ENCODE measurements at regions of chr6 and their contacts with region 1.

Region 1: GRCh38 chr6:25601800-25602673 is 50.0 kb upstream of the SCGN start:
- DNase-seq: peak in 1 of 2 experiments; percentile 43
- H3K4me3 ChIP-seq: no peak overlapping the region
- H3K27ac ChIP-seq: no peak overlapping the region
- H3K4me1 ChIP-seq: no peaks in the 10 kb centered on the region
- H3K27me3 ChIP-seq: no peaks in the 10 kb centered on the region
- CTCF ChIP-seq: peak; percentile 85

Region 2: DNA sequence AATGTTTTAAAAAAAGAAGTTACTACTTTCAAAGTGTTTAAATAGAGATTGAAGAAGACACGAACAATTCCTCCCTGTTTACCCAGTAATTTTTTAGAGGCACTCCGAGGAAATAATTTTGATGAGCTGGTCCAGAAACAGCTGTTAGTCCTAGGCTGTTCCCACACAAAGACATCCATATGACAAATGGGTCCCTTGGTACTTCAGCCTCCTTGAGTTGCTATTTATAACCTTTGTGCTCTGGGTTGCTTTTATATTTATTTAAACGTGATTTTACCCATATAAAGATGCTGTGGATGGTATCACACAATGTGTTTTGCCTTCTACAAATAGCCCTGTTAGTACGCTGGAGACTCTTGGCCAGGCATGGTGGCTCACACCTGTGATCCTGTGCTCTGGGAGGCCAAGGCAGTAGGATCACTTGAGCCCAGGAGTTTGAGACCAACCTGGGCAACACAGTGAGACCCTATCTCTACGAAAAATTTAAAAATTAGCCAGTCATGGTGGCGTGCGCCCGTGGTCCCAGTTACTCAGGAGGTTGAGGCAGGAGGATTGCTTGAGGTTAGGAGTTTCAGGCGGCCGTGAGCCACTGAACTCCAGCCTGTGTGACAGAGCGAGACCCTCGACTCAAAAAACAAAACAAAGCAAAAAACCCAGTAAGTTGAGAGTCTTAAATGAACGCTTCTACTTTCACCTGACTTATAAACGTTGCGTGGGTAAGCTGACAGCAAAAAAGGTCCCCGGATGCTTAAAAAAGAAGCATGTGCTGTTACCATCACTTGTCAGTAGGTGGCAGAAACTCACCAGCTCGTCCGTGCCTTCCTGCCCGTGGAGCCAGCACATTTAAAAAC is 746.4 kb before region 1 on chr6:
- CTCF ChIA-PET with region 1: no interaction called
- POLR2A ChIA-PET with region 1: no interaction called
- intact Hi-C with region 1: loop called (anchors 10 kb)
- DNase-seq: peak; percentile 44 to 58
- H3K4me3 ChIP-seq: no peak overlapping the region
- H3K27ac ChIP-seq: no peak overlapping the region
- H3K4me1 ChIP-seq: peaks cover 26% of the 10 kb centered on the region
- H3K27me3 ChIP-seq: no peaks in the 10 kb centered on the region
- CTCF ChIP-seq: peak; percentile 89

Region 3: DNA sequence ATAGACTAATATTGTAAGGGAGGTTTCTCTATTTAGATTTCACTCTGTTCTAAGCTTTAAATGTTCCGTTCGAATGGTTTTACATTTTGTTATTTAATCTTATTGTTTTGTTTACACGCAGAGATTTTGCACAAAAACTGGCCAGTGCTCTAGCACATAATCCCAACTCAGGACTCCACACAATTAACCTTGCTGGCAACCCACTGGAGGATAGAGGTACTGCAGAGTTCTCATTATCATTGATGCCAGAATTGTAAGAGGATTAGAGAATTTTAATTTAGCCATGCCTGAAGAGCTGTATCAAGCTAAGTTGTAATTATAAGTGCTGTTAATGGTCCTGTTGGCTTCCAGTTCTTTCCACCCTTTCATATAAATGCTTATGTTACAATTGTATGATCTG is 129.7 kb before region 1 on chr6:
- CTCF ChIA-PET with region 1: no interaction called
- POLR2A ChIA-PET with region 1: no interaction called
- intact Hi-C with region 1: no loop called
- DNase-seq: no peak
- H3K4me3 ChIP-seq: no peak overlapping the region
- H3K27ac ChIP-seq: no peak overlapping the region
- H3K4me1 ChIP-seq: no peaks in the 10 kb centered on the region
- H3K27me3 ChIP-seq: no peaks in the 10 kb centered on the region
- CTCF ChIP-seq: peak; percentile 49; the same call in 1 of the 2 replicates

Region 4: DNA sequence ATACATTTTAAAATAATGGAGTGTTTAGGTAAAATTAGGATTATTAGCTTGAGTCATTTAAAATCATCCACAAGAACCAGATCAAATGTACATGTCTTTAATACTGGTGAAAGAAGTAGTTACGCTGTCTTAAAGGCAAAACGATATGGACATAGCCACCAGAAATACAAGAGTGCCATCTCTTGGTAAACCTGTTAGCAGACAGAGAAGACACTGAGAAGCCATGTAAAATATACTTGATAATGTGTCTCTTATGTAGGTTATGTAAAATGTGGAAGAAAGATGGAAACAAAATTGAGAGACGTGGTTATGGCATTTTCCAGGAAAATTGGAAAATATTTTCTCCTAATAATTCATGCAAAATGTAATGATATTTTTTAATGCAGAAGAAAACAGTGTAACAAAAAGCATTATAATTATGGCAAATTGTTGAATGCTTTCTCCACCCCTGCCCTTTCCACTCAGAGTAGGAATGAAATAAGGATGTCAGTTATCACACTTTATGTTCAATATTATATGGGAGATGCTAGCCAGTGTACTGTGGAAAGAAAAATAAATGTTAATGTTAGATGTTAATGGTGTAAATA is 340.6 kb after region 1 on chr6:
- CTCF ChIA-PET with region 1: no interaction called
- POLR2A ChIA-PET with region 1: no interaction called
- intact Hi-C with region 1: loop called (anchors 5 kb)
- DNase-seq: no peak
- H3K4me3 ChIP-seq: no peak overlapping the region
- H3K27ac ChIP-seq: no peak overlapping the region
- H3K4me1 ChIP-seq: no peaks in the 10 kb centered on the region
- H3K27me3 ChIP-seq: no peaks in the 10 kb centered on the region
- CTCF ChIP-seq: peak; percentile 61; the same call in 1 of the 2 replicates

Region 5: DNA sequence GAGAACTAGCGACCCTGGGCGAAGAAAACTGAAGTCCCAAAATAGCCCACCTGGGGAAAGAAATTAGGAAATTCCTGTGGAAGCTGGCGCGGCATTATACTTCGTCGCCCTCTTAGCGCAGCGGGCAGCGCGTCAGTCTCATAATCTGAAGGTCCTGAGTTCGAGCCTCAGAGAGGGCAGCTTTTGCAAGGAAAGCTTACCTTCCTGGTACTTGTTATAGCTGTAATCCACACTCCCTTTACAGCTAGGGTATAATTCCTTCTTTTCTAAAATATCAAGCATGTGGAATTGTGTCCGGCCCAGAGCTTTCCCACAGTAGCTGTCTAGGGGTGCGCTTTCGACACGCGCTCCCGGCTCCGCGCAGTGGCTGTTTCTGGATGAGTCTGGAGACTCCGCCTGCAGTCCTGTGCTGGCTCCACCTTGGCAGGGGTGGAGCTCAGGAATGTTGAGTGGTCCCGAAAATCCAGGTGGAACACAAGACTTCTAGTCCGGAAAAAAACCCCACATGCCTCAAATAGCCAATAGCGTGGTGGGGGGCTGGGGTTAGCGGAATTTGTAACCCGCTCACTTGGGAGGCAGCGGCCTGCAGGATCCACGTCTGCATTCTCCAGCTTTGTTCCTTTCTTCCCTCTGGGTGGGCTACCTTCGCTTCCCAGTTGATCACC is 1141.3 kb after region 1 on chr6:
- CTCF ChIA-PET with region 1: no interaction called
- POLR2A ChIA-PET with region 1: no interaction called
- intact Hi-C with region 1: no loop called
- DNase-seq: peak; percentile 41 to 48
- H3K4me3 ChIP-seq: peak overlapping the region; percentile 47; the same call in 1 of the 2 replicates
- H3K27ac ChIP-seq: no peak overlapping the region
- H3K4me1 ChIP-seq: no peaks in the 10 kb centered on the region
- H3K27me3 ChIP-seq: no peaks in the 10 kb centered on the region
- CTCF ChIP-seq: no peak

Measured in PC-9 (cell line).